Thyroid gland (tissue), 4 donors: ENCODE measurements at regions of chr22 and their contacts with region 1.

Region 1: DNA sequence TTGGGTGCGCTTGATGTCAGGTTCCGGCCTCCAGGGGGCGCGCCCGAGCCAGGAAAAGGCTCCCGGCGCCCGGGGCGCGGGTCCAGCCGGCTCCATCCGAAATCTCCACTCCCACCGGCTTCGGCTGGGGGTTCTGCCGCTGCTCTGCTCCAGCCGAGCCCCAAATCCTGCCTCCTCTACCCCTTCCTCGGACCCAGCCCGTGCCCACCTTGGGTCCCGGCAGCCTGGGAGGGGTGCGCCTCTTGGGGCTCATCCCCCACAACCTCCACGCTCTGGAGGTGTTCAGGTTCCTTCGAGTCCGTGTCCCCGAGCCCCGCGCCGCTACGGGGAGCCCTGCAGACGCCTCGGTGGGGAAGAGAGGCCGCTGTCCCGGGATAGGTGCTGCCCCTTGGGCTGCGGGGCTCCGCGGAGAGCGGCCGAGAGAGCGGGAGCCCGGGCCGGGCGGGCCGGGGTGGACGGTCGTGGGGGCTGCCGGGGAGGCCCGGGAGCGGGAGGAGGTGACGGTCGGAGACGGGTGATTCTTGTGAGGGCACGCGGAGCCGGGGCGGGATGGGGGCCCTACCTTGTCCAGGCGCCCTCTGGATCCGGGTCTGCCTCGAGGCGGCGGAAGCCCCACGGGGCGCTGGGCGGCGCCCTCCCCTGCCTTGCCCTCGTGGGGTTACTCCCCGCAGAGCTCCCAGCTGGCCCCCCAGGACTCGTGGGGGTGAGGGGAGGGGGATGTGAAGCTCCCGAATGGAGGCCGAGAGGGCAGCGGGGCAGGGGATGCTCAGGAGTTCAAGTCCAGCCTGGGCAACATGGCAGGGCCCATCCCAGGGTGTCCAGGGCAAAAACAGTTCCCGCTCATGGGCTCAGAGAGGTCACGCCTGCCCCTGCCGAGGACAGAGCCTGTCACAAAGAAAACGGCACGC is 13.2 kb upstream of the CYB5R3 start:
- DNase-seq: peak; percentile 77 to 85
- H3K4me3 ChIP-seq: peak overlapping the region in 2 of 3 donors; percentile 34 to 35
- H3K27ac ChIP-seq: peak overlapping the region in 1 of 3 donors; percentile 56
- H3K4me1 ChIP-seq: peaks cover 4 to 6% of the 10 kb centered on the region in 2 donors
- H3K27me3 ChIP-seq: no peaks in the 10 kb centered on the region
- CTCF ChIP-seq: peak; percentile 67 to 85 (median 74)
- POLR2A ChIP-seq: no peak

Region 2: DNA sequence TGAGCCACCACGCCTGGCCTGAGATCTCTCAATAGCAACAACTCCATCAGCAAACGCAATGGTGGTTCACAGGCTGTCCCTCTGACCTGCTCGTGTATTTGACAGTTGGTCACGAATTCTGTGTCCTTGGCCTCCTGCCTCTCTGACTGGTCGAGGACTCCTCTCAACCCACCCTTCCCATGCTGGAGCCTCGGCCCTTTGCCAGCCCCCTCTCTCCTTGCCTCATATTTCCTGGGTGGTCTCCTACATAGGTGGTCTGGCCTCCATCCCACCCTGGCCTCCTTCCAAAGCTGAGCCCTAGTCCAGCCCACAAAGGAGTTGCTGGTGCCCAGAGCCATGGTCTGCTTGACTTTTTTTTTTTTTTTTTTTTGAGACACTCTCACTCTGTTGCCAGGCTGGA is 69.7 kb after region 1 on chr22:
- intact Hi-C with region 1: no loop called
- DNase-seq: no peak
- H3K4me3 ChIP-seq: no peak overlapping the region
- H3K27ac ChIP-seq: no peak overlapping the region
- H3K4me1 ChIP-seq: peaks cover 0 to 4% of the 10 kb centered on the region in 2 donors
- H3K27me3 ChIP-seq: no peaks in the 10 kb centered on the region
- CTCF ChIP-seq: no peak
- POLR2A ChIP-seq: no peak

Region 3: DNA sequence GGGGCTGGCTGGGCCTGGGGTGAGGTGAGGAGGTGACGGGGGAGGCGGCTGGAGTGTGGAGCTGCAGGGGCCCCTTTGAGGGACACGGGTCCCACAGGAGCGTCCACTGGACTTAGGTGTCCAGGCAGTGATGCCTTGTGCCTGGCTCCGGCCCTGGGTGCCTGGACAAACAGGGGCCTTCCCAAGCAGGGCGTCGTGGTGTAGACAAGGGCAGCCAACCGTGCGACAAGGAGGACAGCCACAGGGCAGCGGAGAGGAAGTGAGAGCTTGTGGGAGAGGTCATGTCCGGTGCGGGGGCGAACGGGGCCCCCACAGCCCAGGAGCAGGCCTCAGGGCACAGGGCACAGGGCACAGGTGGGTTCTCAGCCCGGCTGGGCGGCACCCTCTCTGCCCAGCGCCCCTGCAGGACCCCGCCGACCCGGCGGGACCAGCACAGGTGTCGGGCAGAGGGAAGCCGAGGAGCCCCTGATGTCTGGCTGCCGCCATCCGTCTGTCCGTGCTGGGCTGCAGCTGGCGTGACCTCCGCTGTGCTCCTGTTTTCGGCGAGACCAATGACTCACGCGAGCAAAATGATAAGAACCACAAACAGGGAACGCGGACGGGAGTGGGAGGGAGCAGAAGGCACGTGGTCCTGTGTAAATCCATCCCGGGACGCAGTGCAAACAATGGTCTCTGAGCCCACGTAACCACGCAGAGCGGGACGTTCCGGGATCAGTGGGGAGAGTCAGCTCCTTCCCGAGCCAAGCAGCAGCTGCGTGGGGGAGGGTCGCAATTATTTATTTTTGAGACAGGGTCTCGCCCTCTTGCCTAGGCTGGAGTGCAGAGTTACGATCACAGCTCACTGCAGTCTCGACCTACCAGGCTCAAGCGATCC is 107.4 kb after region 1 on chr22:
- intact Hi-C with region 1: loop called (anchors 10 kb)
- DNase-seq: peak; percentile 51 to 64
- H3K4me3 ChIP-seq: no peak overlapping the region
- H3K27ac ChIP-seq: peak overlapping the region in 2 of 3 donors; percentile 17 to 73
- H3K4me1 ChIP-seq: peaks cover 21 to 31% of the 10 kb centered on the region in 2 donors
- H3K27me3 ChIP-seq: no peaks in the 10 kb centered on the region
- CTCF ChIP-seq: no peak
- POLR2A ChIP-seq: no peak

Region 4: DNA sequence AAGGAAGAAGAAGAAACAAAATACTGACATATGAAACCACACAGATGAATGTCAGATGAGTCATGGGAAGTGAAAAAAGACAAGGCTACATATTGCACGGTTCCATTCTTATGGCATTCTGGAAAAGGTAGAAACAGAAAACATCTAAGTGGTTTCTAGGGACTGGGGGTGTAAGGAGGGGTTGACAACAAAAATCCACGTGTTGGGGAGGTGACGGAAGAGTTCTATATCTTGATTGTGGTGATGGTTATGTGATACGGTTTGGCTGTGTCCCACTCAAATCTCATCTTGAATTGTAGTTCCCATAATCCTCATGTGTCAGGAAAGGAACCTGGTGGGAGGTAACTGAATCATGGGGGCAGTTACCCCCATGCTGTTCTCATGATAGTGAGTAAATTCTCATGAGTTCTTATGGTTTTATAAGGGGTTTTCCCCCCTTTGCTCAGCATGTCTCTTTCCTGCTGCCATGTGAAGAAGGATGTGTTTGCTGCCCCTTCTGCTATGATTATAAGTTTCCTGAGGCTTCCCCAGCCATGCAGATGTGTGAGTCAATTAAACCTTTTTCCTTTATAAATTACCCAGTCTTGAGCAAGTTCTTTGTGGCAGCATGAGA is 201.1 kb after region 1 on chr22:
- intact Hi-C with region 1: loop called (anchors 10 kb)
- DNase-seq: no peak
- H3K4me3 ChIP-seq: no peak overlapping the region
- H3K27ac ChIP-seq: no peak overlapping the region
- H3K4me1 ChIP-seq: peaks cover 12 to 18% of the 10 kb centered on the region in 2 donors
- H3K27me3 ChIP-seq: no peaks in the 10 kb centered on the region
- CTCF ChIP-seq: no peak
- POLR2A ChIP-seq: no peak

Region 5: GRCh38 chr22:43042101-43042780 is 379.9 kb after region 1 on chr22:
- intact Hi-C with region 1: loop called (anchors 10 kb)
- DNase-seq: peak in 1 of 2 donors; percentile 51
- H3K4me3 ChIP-seq: no peak overlapping the region
- H3K27ac ChIP-seq: peak overlapping the region in 2 of 3 donors; percentile 12 to 18
- H3K4me1 ChIP-seq: peaks cover 7 to 10% of the 10 kb centered on the region in 2 donors
- H3K27me3 ChIP-seq: no peaks in the 10 kb centered on the region
- CTCF ChIP-seq: no peak
- POLR2A ChIP-seq: no peak